H1 (cell line): ENCODE measurements at regions of chr7 and their contacts with region 1.

Region 1: DNA sequence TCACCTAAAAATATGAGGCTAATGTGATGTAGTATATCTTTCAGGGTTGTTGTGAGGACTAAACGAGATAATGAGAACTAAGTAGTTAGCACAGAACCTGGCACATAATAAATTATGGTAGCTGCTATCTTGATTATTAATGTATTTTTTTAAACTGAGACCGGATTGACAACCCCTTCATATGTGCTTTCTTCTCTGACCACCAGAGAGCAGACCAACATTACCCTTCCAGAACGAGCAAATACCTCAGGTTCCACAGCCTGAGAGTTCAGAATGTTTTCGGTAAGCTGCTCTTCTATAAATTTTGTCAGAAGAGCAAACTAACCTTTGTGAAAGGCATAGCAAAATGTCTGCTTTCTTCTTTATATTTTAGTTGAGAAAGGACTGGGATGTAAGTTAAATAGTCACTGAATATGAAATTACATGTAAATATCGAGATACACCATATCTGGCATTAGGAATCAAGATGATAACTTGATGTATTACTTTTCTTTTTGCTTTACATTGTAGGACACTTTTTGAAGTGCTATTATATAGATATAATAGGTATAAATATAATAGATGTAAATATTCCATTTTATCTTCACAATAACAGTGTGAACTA is 13.6 kb upstream of the BPGM start:
- DNase-seq: no peak
- H3K4me3 ChIP-seq: no peak overlapping the region
- H3K27ac ChIP-seq: no peak overlapping the region
- H3K4me1 ChIP-seq: no peaks in the 10 kb centered on the region
- H3K27me3 ChIP-seq: no peaks in the 10 kb centered on the region
- CTCF ChIP-seq: peak in 2 of 3 experiments; percentile 70 to 73; a peak in 3 of 4 replicates
- EP300 ChIP-seq: no peak
- POLR2A ChIP-seq: no peak
- RAD21 ChIP-seq: peak; percentile 89 to 92

Region 2: GRCh38 chr7:134619627-134620331 is 13.3 kb before region 1 on chr7:
- CTCF ChIA-PET with region 1: interaction called, 34 read pairs
- POLR2A ChIA-PET with region 1: no interaction called
- DNase-seq: no peak
- H3K4me3 ChIP-seq: no peak overlapping the region
- H3K27ac ChIP-seq: no peak overlapping the region
- H3K4me1 ChIP-seq: no peaks in the 10 kb centered on the region
- H3K27me3 ChIP-seq: no peaks in the 10 kb centered on the region; a peak in 1 of 7 replicates
- CTCF ChIP-seq: no peak
- EP300 ChIP-seq: no peak
- POLR2A ChIP-seq: no peak
- RAD21 ChIP-seq: no peak

Region 3: DNA sequence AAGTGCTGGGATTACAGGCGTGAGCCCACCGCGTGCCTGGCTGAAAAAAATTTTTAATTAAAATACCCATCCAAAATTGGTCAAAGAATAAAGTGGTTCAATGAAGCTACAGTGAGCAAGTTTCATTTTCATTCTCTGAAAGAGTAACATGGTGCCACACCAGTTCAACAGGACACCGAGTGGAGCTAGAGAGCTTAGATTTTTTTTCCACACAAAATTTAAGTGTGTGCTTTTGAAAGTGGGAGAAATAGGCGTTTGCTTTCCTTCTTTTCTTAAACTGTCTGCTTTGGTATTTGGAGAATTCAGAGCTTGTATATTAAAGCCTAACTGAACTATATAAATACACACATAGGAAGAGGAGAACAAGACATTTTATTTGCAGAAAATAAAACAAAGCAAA is 57.0 kb after region 1 on chr7:
- CTCF ChIA-PET with region 1: interaction called, 11 read pairs
- POLR2A ChIA-PET with region 1: no interaction called
- DNase-seq: no peak
- H3K4me3 ChIP-seq: no peak overlapping the region
- H3K27ac ChIP-seq: no peak overlapping the region
- H3K4me1 ChIP-seq: peaks cover 0 to 3% (median 0%) of the 10 kb centered on the region in 4 experiments; a peak in 1 of 7 replicates
- H3K27me3 ChIP-seq: no peaks in the 10 kb centered on the region
- CTCF ChIP-seq: peak in 1 of 3 experiments; percentile 9; a peak in 1 of 4 replicates
- EP300 ChIP-seq: no peak
- POLR2A ChIP-seq: no peak
- RAD21 ChIP-seq: peak; percentile 42 to 46

Region 4: GRCh38 chr7:134750083-134751062 is 117.3 kb after region 1 on chr7:
- CTCF ChIA-PET with region 1: interaction called, 14 read pairs
- POLR2A ChIA-PET with region 1: interaction called, 3 read pairs
- DNase-seq: peak; percentile 50 to 89
- H3K4me3 ChIP-seq: no peak overlapping the region
- H3K27ac ChIP-seq: no peak overlapping the region
- H3K4me1 ChIP-seq: no peaks in the 10 kb centered on the region; a peak in 2 of 7 replicates
- H3K27me3 ChIP-seq: no peaks in the 10 kb centered on the region
- CTCF ChIP-seq: peak; percentile 83 to 97 (median 85)
- EP300 ChIP-seq: no peak
- POLR2A ChIP-seq: no peak
- RAD21 ChIP-seq: peak; percentile 73 to 84

Region 5: DNA sequence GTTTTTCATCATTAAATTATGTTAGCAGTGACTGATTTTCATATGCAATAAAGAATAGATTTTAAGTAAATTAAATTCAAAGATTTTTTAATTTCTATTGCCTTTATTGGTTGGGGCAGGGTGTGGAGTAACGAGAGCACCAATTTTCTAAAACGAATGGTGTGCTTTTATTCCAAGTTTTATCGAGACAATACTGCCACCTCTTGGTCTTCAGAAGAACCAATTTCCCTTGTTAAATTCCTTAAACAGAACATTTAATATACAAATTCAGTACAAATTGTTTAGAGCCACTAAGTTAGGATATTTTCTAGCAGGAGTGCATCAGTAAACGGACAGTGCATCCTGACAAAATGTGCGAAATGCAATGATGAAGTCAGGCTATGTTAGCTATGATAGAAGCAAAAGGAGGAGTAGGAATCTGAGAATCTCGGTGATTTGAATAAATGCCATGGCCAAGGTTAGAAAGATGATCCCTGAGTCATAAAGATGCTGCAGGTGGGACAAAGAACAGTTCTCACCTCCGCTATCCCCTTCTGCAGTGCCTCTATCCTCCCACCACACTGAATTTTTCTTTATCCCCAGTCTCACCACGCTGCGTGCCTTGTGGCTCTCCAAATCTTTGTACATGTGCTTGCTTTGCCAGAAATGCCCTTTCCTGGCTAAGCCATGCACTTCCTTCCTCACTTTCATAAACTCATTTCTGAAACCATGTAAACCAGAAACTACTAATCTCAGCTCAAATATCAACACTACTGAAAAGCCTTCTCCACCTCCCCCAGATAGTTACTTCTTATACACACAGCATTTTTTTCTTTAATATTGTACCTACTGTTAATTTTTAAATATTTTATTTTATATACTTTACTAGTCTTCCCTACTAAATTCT is 321.4 kb after region 1 on chr7:
- CTCF ChIA-PET with region 1: interaction called, 22 read pairs
- POLR2A ChIA-PET with region 1: no interaction called
- DNase-seq: no peak
- H3K4me3 ChIP-seq: no peak overlapping the region
- H3K27ac ChIP-seq: no peak overlapping the region
- H3K4me1 ChIP-seq: no peaks in the 10 kb centered on the region
- H3K27me3 ChIP-seq: peaks cover 0 to 1% (median 0%) of the 10 kb centered on the region in 4 experiments; a peak in 1 of 7 replicates
- CTCF ChIP-seq: peak in 2 of 3 experiments; percentile 33 to 49; a peak in 2 of 4 replicates
- EP300 ChIP-seq: no peak
- POLR2A ChIP-seq: no peak
- RAD21 ChIP-seq: peak; percentile 69 to 74